ENCODE measurements at regions of chr1 and their contacts with region 1.

Region 1: GRCh38 chr1:85692730-85693314 is 15.4 kb downstream of the ZNHIT6 start:
- DNase-seq: peak; percentile 60
- H3K4me3 ChIP-seq: no peak overlapping the region
- H3K27ac ChIP-seq: peak overlapping the region; percentile 38
- H3K4me1 ChIP-seq: peaks cover 7% of the 10 kb centered on the region
- H3K27me3 ChIP-seq: no peaks in the 10 kb centered on the region
- CTCF ChIP-seq: peak; percentile 22 to 26
- POLR2A ChIP-seq: no peak

Region 2: GRCh38 chr1:85109475-85109874 is 583.3 kb before region 1 on chr1:
- CTCF ChIA-PET with region 1: interaction called, 16 read pairs
- POLR2A ChIA-PET with region 1: no interaction called
- dilution Hi-C with region 1: no loop called
- intact Hi-C with region 1: loop called (anchors 5 kb)
- DNase-seq: peak; percentile 71
- H3K4me3 ChIP-seq: no peak overlapping the region
- H3K27ac ChIP-seq: no peak overlapping the region
- H3K4me1 ChIP-seq: no peaks in the 10 kb centered on the region
- H3K27me3 ChIP-seq: peaks cover 8 to 23% of the 10 kb centered on the region in 2 experiments
- CTCF ChIP-seq: peak; percentile 65 to 80
- POLR2A ChIP-seq: no peak

Region 3: GRCh38 chr1:85406887-85407533 is 285.8 kb before region 1 on chr1:
- CTCF ChIA-PET with region 1: interaction called, 4 read pairs
- POLR2A ChIA-PET with region 1: no interaction called
- dilution Hi-C with region 1: no loop called
- intact Hi-C with region 1: loop called (anchors 10 kb)
- DNase-seq: peak; percentile 96
- H3K4me3 ChIP-seq: peak overlapping the region in 1 of 3 experiments; percentile 46
- H3K27ac ChIP-seq: peak overlapping the region; percentile 91
- H3K4me1 ChIP-seq: peaks cover 32% of the 10 kb centered on the region
- H3K27me3 ChIP-seq: no peaks in the 10 kb centered on the region
- CTCF ChIP-seq: no peak
- POLR2A ChIP-seq: no peak

Region 4: DNA sequence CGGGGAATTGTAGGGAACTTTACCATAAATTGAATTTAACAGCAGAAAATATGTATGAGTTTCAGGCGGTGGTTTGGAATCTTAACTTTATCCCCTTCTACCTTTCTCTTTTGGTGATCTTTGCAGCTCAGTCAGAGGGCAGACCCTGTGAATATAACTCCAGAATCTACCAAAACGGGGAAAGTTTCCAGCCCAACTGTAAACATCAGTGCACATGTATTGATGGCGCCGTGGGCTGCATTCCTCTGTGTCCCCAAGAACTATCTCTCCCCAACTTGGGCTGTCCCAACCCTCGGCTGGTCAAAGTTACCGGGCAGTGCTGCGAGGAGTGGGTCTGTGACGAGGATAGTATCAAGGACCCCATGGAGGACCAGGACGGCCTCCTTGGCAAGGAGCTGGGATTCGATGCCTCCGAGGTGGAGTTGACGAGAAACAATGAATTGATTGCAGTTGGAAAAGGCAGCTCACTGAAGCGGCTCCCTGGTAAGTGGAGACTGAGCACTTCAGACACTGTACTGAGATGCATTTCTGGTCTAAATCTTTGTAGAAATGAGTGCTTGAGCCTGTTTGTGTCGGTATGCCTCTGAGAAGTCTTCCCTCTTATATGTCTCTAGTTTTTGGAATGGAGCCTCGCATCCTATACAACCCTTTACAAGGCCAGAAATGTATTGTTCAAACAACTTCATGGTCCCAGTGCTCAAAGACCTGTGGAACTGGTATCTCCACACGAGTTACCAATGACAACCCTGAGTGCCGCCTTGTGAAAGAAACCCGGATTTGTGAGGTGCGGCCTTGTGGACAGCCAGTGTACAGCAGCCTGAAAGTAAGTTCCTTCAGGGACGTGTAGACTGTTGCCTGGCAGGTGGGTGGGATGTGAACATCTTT is 110.8 kb before region 1 on chr1:
- CTCF ChIA-PET with region 1: interaction called, 191 read pairs
- POLR2A ChIA-PET with region 1: interaction called, 66 read pairs
- dilution Hi-C with region 1: no loop called
- intact Hi-C with region 1: loop called (anchors 1 kb)
- DNase-seq: peak; percentile 54
- H3K4me3 ChIP-seq: peak overlapping the region; percentile 57 to 98 (median 78)
- H3K27ac ChIP-seq: peak overlapping the region; percentile 92
- H3K4me1 ChIP-seq: peaks cover 16% of the 10 kb centered on the region
- H3K27me3 ChIP-seq: no peaks in the 10 kb centered on the region
- CTCF ChIP-seq: peak in 1 of 2 donors; percentile 7
- POLR2A ChIP-seq: peak; percentile 45

Region 5: GRCh38 chr1:85612704-85613361 is 80.0 kb before region 1 on chr1:
- CTCF ChIA-PET with region 1: interaction called, 16 read pairs
- POLR2A ChIA-PET with region 1: no interaction called
- dilution Hi-C with region 1: no loop called
- intact Hi-C with region 1: loop called (anchors 1 kb)
- DNase-seq: peak; percentile 24
- H3K4me3 ChIP-seq: no peak overlapping the region
- H3K27ac ChIP-seq: no peak overlapping the region
- H3K4me1 ChIP-seq: peaks cover 18% of the 10 kb centered on the region
- H3K27me3 ChIP-seq: no peaks in the 10 kb centered on the region
- CTCF ChIP-seq: peak; percentile 36 to 41
- POLR2A ChIP-seq: no peak

Region 6: DNA sequence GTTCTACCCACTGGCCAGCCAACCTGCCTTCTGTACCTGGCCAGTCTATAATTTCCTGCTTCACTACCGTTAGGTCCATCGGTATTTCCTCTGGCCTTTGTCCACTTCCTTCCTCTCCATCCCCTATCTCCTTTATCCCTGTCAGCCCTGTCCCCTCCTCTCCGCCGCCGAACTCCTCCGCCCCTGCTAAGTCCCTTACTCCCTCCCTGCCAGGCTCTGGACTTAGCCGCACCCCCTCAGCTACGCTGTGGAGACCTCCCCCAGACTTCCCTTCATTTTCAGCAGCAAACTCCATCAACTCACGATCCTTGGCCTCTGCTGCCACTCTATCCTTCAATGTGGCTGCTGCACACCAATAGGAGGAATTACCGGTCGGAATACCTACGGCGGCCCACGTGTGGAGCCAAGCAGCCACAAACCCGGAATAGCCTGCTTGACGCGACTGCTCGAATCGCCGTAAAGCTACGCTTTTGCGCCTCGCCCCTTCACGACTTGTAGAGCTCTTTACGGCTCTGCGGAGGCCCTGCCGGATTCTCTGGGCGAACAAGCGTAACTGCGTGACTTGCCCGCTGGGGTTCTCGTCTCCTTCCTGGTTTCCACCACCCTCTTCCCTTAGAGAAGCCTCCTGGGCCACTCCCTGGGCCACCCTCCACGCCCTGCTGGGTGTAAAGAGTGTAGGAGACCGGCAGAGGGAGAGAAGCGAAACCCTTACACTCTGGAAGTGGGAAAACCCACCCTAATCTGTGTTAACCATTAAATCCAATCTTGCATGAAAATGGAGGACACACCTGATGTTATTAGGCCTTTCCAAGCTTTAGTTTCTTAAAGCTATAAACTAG is 15.4 kb after region 1 on chr1 and contains the start of gene ZNHIT6:
- CTCF ChIA-PET with region 1: interaction called, 17 read pairs
- POLR2A ChIA-PET with region 1: no interaction called
- dilution Hi-C with region 1: no loop called
- intact Hi-C with region 1: no loop called
- DNase-seq: peak; percentile 95
- H3K4me3 ChIP-seq: peak within 1 kb of the TSS; percentile 43 to 82 (median 69)
- H3K27ac ChIP-seq: peak within 1 kb of the TSS; percentile 41
- H3K4me1 ChIP-seq: peaks cover 13% of the 10 kb centered on the region
- H3K27me3 ChIP-seq: no peaks in the 10 kb centered on the region
- CTCF ChIP-seq: peak; percentile 17 to 42
- POLR2A ChIP-seq: peak; percentile 60
- total RNA-seq, gene ZNHIT6: 18.8 and 21.4 TPM in 2 replicates